Sigmoid colon (tissue), 7 donors: ENCODE measurements at regions of chr13 and their contacts with region 1.

Region 1: DNA sequence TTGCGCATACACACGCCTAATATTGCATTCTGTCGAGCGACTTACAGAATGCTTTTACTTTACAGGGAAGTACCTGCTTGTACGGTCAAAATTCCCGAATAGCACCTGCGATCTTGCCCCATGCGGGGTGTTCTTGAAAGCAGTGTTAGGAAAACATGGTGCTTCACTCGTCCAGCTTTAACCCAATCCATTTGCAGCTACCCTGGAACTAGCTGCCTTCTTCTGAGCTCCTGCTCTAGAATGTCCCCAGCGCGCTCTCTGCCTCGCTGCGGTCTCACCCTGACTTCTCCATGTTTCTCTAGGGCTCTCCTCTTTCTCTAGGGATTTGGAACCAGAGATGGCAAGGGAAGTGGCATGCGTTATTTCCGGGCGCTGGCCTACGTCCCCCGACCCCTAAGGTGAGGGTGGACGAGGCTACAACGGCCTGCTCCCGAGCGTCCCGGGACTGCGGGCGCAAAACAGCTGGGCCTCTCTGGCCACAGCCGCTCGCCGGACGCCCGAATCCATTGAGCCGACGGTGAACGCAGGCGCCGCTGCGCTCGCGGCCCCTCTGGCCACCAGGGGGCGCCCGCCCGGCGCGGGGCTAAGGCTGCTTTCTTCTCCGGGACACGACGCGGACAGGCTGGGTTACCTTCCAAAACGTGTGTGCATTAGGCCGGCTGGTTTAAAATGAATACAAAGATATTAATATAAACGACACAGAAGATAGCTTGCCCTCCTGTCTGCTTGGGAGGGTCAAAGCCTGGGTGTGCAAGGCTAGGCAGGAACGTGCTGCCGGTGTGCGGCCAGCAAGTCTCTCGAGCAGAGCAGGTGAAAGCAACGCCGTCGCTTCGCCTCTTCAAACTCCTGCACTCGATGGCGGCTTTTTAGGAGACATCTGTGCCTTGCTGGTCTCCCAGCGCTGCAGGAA is 1.8 kb upstream of the SPRY2 start:
- DNase-seq: peak; percentile 90
- H3K4me3 ChIP-seq: peak overlapping the region; percentile 63 to 73 (median 67)
- H3K27ac ChIP-seq: peak overlapping the region; percentile 88 to 92 (median 90)
- H3K4me1 ChIP-seq: peaks cover 0 to 13% (median 10%) of the 10 kb centered on the region in 4 donors
- H3K27me3 ChIP-seq: no peaks in the 10 kb centered on the region
- CTCF ChIP-seq: peak; percentile 78 to 98 (median 90)
- EP300 ChIP-seq: no peak
- POLR2A ChIP-seq: peak in 1 of 2 donors; percentile 23

Region 2: GRCh38 chr13:79679334-79679733 is 663.4 kb before region 1 on chr13:
- intact Hi-C with region 1: loop called (anchors 10 kb)
- DNase-seq: peak; percentile 81
- H3K4me3 ChIP-seq: no peak overlapping the region
- H3K27ac ChIP-seq: no peak overlapping the region
- H3K4me1 ChIP-seq: no peaks in the 10 kb centered on the region
- H3K27me3 ChIP-seq: no peaks in the 10 kb centered on the region
- CTCF ChIP-seq: peak in 3 of 4 experiments; percentile 60 to 66 (median 63)
- EP300 ChIP-seq: no peak
- POLR2A ChIP-seq: no peak

Region 3: DNA sequence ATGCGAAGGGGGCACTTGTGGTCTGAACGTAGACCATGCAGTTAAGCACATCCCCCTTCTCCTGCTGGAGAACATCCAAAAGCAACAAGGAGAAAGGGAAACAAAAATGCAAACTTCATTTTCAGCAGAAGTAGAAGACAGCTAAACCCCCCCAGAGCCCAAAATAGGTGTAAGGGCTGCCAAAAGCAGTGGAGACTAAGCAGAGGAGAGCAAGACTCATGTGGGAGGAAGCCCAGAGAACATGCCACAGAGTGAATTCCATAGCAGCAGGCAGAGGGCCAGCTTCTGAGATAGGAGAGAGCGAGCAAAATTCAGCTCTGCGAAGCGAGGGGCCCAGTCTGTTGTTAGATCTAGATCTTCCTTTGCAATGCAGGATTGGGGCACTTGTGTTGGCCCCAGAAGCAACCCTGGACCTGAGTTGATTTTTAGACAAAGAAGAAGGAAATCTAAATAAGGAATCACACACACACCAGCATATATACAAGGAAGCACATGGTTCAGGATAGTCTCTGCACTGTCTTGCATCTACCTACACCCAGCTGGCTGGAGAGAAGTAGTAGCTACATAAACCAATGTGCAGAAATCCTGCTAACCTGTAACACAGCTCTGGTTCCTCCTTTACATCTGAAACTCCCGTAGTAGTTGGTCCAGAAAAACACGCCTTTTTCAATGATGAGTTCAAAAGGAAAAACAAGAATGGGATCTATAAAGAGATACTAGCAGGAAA is 201.4 kb before region 1 on chr13:
- intact Hi-C with region 1: no loop called
- DNase-seq: no peak
- H3K4me3 ChIP-seq: peak overlapping the region in 1 of 4 donors; percentile 3
- H3K27ac ChIP-seq: peak overlapping the region in 2 of 4 donors; percentile 12 to 59
- H3K4me1 ChIP-seq: peaks cover 0 to 31% (median 18%) of the 10 kb centered on the region in 4 donors
- H3K27me3 ChIP-seq: no peaks in the 10 kb centered on the region
- CTCF ChIP-seq: no peak
- EP300 ChIP-seq: no peak
- POLR2A ChIP-seq: no peak

Region 4: DNA sequence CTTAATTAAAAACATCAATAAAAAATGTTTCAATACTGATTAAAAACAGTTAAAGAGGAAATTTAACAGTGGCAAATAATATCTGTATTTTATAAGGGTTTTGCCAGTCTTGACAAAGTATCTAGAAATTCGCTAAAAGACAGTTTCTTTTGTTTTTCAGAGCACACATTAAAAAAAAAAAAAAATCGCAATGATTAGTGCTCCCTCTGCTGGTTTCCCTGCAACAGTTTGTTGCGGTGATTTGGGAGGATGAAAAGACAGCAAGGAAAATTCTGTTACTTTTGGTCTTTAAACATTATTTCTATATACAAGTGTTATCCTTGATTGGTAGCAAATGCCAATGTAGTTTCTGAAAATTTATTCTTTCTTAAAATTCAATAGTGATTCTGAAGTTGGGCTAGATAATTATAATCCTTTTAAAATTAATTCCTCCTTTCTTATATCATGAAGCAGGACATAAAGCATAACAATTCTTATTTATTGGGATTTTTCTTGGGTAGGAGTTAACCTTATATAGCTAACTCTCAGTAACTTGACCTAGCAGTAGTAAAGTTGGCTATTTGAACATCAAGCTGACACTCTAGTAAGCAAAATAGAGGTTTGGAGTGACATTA is 21.3 kb after region 1 on chr13:
- intact Hi-C with region 1: loop called (anchors 2 kb)
- DNase-seq: no peak
- H3K4me3 ChIP-seq: peak overlapping the region in 1 of 4 donors; percentile 12
- H3K27ac ChIP-seq: no peak overlapping the region
- H3K4me1 ChIP-seq: peaks cover 0 to 4% (median 0%) of the 10 kb centered on the region in 4 donors
- H3K27me3 ChIP-seq: no peaks in the 10 kb centered on the region
- CTCF ChIP-seq: peak; percentile 23 to 70 (median 58)
- EP300 ChIP-seq: no peak
- POLR2A ChIP-seq: no peak

Region 5: DNA sequence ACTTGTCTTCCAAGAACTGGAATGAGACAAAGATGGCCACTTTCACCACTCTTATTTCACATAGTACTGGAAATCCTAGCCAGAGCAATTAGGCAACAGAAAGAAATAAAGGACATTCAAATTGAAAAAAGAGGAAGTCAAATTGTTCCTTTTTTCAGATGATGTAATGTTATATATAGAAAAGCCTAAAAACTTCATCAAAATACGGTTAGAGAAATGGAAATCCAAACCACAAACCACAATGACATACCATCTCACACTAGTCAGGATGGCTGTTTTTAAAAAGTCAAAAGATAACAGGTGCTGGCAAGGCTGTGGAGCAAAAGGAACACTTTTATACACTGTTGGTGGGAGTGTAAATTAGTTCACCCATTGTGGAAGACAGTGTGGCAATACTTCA is 111.5 kb after region 1 on chr13:
- intact Hi-C with region 1: no loop called
- DNase-seq: no peak
- H3K4me3 ChIP-seq: no peak overlapping the region
- H3K27ac ChIP-seq: no peak overlapping the region
- H3K4me1 ChIP-seq: no peaks in the 10 kb centered on the region
- H3K27me3 ChIP-seq: no peaks in the 10 kb centered on the region
- CTCF ChIP-seq: no peak
- EP300 ChIP-seq: no peak
- POLR2A ChIP-seq: no peak

Region 6: GRCh38 chr13:80469853-80470381 is 127.2 kb after region 1 on chr13:
- intact Hi-C with region 1: loop called (anchors 2 kb)
- DNase-seq: peak; percentile 96
- H3K4me3 ChIP-seq: no peak overlapping the region
- H3K27ac ChIP-seq: peak overlapping the region; percentile 58 to 84 (median 75)
- H3K4me1 ChIP-seq: peaks cover 2 to 15% (median 10%) of the 10 kb centered on the region in 4 donors
- H3K27me3 ChIP-seq: no peaks in the 10 kb centered on the region
- CTCF ChIP-seq: no peak
- EP300 ChIP-seq: peak; percentile 62 to 90 (median 70)
- POLR2A ChIP-seq: no peak

Region 7: DNA sequence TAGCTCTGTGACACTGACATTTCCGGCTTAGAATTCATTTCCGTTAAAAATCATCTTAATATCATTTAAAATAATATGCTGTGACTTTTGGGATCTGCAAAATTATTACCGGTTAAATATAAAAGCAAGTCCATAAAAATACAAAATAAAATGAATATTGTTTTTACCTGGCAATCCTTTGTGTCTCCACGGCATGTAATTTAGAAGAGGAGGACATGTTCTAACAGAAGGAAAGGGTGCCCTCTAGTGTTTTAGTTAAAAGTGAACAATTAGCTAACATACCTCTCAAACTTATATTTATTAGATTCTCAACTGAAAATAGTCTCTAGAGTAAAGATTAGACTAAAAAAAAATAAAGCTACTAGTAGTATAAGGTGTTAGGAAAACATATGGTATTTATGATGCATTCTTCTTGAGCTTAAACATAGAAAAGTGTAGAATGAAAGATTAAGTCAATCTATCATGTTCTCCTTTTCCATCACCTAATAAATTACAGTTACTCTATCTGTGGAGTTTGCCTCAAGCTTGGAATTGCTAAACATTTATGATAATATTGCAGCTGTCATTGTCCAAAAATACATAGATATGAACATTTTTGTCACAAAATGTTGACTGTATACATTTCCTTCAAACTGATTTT is 674.9 kb after region 1 on chr13:
- intact Hi-C with region 1: loop called (anchors 10 kb)
- DNase-seq: no peak
- H3K4me3 ChIP-seq: no peak overlapping the region
- H3K27ac ChIP-seq: no peak overlapping the region
- H3K4me1 ChIP-seq: no peaks in the 10 kb centered on the region
- H3K27me3 ChIP-seq: no peaks in the 10 kb centered on the region
- CTCF ChIP-seq: peak in 3 of 4 experiments; percentile 23 to 44 (median 25)
- EP300 ChIP-seq: no peak
- POLR2A ChIP-seq: no peak